ENCODE measurements at regions of chr9 and their contacts with region 1.

Region 1: GRCh38 chr9:125746017-125746773 is 978 bp upstream of the PBX3 start:
- DNase-seq: peak; percentile 96 to 97 (median 97)
- ATAC-seq: peak; percentile 95 to 96 (median 96)
- H3K4me3 ChIP-seq: peak overlapping the region; percentile 43 to 96 (median 76)
- H3K27ac ChIP-seq: peak overlapping the region; percentile 40 to 94 (median 88)
- H3K4me1 ChIP-seq: peaks cover 0 to 38% (median 12%) of the 10 kb centered on the region in 12 donors
- H3K27me3 ChIP-seq: no peaks in the 10 kb centered on the region
- CTCF ChIP-seq: peak in 2 of 12 donors; percentile 6 to 9
- POLR2A ChIP-seq: peak in 1 of 2 donors; percentile 65

Region 2: GRCh38 chr9:125706661-125707471 is 39.3 kb before region 1 on chr9 and contains the start of gene MAPKAP1:
- intact Hi-C with region 1: loop called in 4 of 10 experiments (anchors 2 to 5 kb)
- DNase-seq: peak; percentile 96 to 99 (median 99)
- ATAC-seq: peak; percentile 100
- H3K4me3 ChIP-seq: peak within 1 kb of the TSS; percentile 68 to 100 (median 97)
- H3K27ac ChIP-seq: peak within 1 kb of the TSS in 11 of 12 donors; percentile 35 to 88 (median 80)
- H3K4me1 ChIP-seq: peaks cover 0 to 28% (median 20%) of the 10 kb centered on the region in 12 donors
- H3K27me3 ChIP-seq: no peaks in the 10 kb centered on the region
- CTCF ChIP-seq: peak in 1 of 12 donors; percentile 11
- POLR2A ChIP-seq: peak in 1 of 2 donors; percentile 89
- total RNA-seq, gene MAPKAP1: 76.2 to 145 (median 113) TPM

Region 3: GRCh38 chr9:125810161-125810560 is 64.0 kb after region 1 on chr9:
- intact Hi-C with region 1: no loop called
- DNase-seq: no peak
- ATAC-seq: no peak
- H3K4me3 ChIP-seq: no peak overlapping the region
- H3K27ac ChIP-seq: no peak overlapping the region
- H3K4me1 ChIP-seq: peaks cover 0 to 9% (median 0%) of the 10 kb centered on the region in 12 donors
- H3K27me3 ChIP-seq: no peaks in the 10 kb centered on the region
- CTCF ChIP-seq: no peak
- POLR2A ChIP-seq: no peak

Region 4: GRCh38 chr9:125820100-125820804 is 74.1 kb after region 1 on chr9:
- intact Hi-C with region 1: loop called in 4 of 10 experiments (anchors 5 to 10 kb)
- DNase-seq: no peak
- ATAC-seq: peak; percentile 41 to 66 (median 46)
- H3K4me3 ChIP-seq: peak overlapping the region in 8 of 12 donors; percentile 8 to 39 (median 30)
- H3K27ac ChIP-seq: peak overlapping the region; percentile 5 to 70 (median 48)
- H3K4me1 ChIP-seq: peaks cover 0 to 40% (median 7%) of the 10 kb centered on the region in 12 donors
- H3K27me3 ChIP-seq: no peaks in the 10 kb centered on the region
- CTCF ChIP-seq: no peak
- POLR2A ChIP-seq: no peak

Region 5: DNA sequence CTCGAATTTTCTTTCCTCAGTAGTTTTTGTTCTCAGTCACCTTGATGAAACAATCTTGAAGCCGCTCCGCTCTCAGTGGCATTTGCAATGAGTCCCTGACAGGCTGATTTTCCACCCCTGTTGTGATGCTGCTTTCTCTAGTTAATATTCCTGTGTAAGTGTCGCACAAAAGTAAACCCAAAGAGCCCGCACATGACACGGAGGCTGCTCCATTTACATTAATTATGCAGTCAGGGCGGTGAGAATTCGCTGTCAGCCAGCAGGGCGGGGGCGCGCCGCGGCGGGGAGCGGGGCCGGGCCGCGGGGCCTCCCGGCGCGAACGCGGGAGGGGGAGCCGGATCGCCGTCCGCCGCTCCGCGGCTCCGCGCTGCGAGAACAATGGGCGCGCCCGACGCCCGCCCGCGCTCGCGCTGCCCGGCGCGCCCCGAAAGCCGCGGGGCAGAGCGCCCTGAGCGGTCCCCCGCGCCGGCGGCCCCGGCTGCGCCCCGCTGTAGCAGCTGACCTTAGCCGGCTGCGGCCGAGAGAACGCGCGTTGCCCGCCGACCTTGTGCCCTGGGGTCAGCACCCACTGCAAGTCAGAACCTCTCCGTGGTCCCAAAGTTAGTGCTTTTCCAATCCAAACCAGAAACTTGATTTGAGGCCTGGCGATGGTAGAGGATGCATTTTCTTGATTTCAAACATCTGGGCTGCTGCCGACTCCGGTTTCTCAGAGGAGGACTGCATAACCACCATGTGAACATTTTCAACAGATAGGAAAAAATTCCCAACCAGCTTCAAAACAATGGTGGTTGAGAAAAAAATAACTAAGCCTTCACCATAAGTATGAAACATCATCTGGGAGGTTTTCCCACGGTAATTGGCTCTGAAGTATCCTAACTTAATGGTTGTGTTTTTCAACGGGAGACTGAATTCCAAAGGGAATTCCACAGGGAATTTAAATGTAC is 143.6 kb after region 1 on chr9:
- intact Hi-C with region 1: loop called in 9 of 10 experiments (anchors 5 to 10 kb)
- DNase-seq: peak; percentile 39 to 62 (median 50)
- ATAC-seq: peak; percentile 53 to 86 (median 74)
- H3K4me3 ChIP-seq: peak overlapping the region; percentile 29 to 69 (median 60)
- H3K27ac ChIP-seq: peak overlapping the region; percentile 3 to 85 (median 72)
- H3K4me1 ChIP-seq: peaks cover 0 to 45% (median 22%) of the 10 kb centered on the region in 12 donors
- H3K27me3 ChIP-seq: peaks cover 0 to 6% (median 0%) of the 10 kb centered on the region in 9 donors
- CTCF ChIP-seq: no peak
- POLR2A ChIP-seq: no peak

Region 6: DNA sequence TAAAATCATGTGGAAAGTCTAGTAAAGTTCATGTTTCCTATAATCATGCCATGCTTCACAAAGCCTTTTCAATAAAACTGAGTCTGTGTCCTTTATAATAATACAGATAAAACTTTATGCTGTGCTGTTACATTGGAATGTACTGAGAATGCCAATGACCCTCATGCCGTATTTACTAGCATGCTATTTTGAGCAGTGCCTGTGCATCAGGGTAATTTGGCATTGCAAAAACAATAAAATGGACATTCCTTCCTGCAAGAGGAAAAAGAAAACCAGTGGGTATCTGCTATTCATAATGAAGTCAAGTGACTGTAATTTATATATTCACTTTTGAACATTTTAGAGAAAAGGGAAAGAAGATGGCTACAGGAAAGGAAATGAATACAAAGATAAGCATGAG is 159.9 kb after region 1 on chr9:
- intact Hi-C with region 1: loop called in 1 of 10 experiments (anchors 5 kb)
- DNase-seq: no peak
- ATAC-seq: no peak
- H3K4me3 ChIP-seq: no peak overlapping the region
- H3K27ac ChIP-seq: no peak overlapping the region
- H3K4me1 ChIP-seq: peaks cover 0 to 42% (median 8%) of the 10 kb centered on the region in 12 donors
- H3K27me3 ChIP-seq: no peaks in the 10 kb centered on the region
- CTCF ChIP-seq: no peak
- POLR2A ChIP-seq: no peak